ENCODE measurements at regions of chr10 and their contacts with region 1.

Region 1: DNA sequence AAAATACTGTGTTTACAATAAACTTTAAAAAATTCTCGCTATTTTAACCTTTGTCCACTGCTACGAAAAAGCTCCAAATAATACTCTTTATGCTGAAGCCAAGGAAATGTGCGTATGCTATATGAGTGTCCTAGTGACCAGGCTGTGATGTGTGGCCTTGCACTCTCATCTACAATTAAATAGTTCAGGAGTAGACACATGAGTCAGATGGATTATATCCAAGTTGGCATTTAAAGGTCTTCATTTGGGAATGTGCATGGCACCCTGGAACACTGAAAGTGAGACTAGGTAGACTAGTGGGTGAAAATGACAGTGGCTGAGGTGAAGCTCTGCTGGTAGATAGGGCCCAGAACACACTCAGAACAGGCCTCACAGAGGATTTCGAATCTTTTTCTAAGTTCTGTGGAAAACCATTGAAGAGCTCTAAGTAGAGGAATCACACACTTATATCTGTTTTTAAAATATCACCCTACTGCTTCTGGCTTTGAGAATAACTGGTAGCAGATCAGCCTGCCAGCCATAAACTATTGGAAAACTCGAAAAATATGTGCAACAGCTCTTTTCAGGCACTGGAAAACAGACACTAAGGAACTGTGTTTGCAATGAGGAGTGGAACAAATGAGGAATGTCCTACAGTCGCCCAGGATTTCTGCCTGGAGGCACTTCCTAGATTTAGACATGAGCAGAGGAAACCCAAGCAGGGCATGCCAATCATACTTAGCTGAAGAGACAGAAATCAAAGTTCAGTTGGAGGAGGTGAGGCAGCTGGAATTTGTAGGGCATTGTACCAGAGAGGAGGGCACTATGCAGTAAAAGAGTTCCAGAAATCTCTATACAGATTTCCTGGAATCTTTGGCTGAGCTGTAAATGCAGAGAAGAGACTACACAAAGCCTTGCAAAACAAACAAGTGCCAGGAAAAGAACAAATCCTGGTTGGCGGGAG is 603.8 kb upstream of the LRRTM3 start:
- DNase-seq: peak; percentile 81
- ATAC-seq: peak; percentile 51
- H3K4me3 ChIP-seq: no peak overlapping the region
- H3K27ac ChIP-seq: no peak overlapping the region
- H3K4me1 ChIP-seq: peaks cover 20% of the 10 kb centered on the region
- H3K27me3 ChIP-seq: no peaks in the 10 kb centered on the region
- CTCF ChIP-seq: no peak

Region 2: GRCh38 chr10:66513504-66513903 is 191.5 kb after region 1 on chr10:
- CTCF ChIA-PET with region 1: no interaction called
- POLR2A ChIA-PET with region 1: no interaction called
- intact Hi-C with region 1: loop called (anchors 2 kb)
- DNase-seq: no peak
- ATAC-seq: no peak
- H3K4me3 ChIP-seq: no peak overlapping the region
- H3K27ac ChIP-seq: no peak overlapping the region
- H3K4me1 ChIP-seq: peaks cover 20% of the 10 kb centered on the region
- H3K27me3 ChIP-seq: no peaks in the 10 kb centered on the region
- CTCF ChIP-seq: no peak

Region 3: DNA sequence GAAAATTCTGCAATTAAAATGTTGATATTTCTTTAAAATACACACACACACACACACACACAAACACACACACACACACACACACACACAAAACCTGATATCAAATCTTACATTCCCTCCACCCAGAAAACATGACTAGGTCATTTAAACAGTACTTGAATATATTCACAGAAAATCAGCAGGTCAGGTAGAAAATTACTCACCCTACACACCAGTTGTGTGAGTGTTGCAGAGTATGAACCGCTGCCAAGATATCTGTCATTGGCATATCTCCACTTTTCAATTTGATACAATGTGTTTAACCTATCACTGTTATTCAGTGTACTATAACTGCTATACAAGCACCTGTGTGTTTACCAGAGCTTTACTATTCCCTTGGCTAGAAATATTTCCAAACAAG is 320.2 kb after region 1 on chr10:
- CTCF ChIA-PET with region 1: no interaction called
- POLR2A ChIA-PET with region 1: no interaction called
- intact Hi-C with region 1: no loop called
- DNase-seq: peak; percentile 98
- ATAC-seq: peak; percentile 70
- H3K4me3 ChIP-seq: no peak overlapping the region
- H3K27ac ChIP-seq: no peak overlapping the region
- H3K4me1 ChIP-seq: peaks cover 19% of the 10 kb centered on the region
- H3K27me3 ChIP-seq: no peaks in the 10 kb centered on the region
- CTCF ChIP-seq: no peak

Measured in PC-3 (cell line).